B cell (primary cell): ENCODE measurements at regions of chr17 and their contacts with region 1.

Region 1: DNA sequence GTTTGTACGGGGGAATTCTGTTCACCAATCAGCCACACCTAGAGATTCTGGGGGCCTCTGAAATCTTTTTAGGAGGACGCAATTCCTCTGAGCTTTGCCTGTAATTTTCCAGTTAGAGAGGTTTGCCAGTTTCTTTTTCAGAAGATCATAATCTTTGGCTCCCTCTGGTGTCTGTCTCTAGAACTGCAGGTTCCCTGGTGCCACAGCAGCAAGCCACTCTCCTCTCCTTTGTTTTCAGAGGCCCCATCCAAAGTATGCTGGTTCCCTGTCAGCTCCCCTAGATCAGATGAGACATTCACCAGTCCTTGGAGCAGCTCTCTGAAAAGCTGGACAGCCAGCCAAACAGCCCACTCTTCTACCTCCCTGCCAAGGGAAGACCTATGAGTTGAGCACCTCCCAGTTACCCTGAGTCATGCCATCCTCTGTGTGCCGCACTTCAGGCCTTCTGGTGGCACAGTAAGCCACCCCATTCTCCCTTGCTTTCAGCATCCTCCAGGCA is 36.1 kb downstream of the RNF112 start:
- DNase-seq: peak; percentile 80
- ATAC-seq: peak; percentile 71
- H3K4me3 ChIP-seq: no peak overlapping the region
- H3K4me3 Mint-ChIP-seq: no peak overlapping the region
- H3K27ac ChIP-seq: no peak overlapping the region
- H3K27ac Mint-ChIP-seq: no peak overlapping the region
- H3K4me1 ChIP-seq: no peaks in the 10 kb centered on the region
- H3K4me1 Mint-ChIP-seq: no peaks in the 10 kb centered on the region
- H3K27me3 ChIP-seq: peaks cover 0 to 15% (median 5%) of the 10 kb centered on the region in 4 experiments
- H3K27me3 Mint-ChIP-seq: peaks cover 22% of the 10 kb centered on the region
- CTCF ChIP-seq: peak; percentile 92

Region 2: DNA sequence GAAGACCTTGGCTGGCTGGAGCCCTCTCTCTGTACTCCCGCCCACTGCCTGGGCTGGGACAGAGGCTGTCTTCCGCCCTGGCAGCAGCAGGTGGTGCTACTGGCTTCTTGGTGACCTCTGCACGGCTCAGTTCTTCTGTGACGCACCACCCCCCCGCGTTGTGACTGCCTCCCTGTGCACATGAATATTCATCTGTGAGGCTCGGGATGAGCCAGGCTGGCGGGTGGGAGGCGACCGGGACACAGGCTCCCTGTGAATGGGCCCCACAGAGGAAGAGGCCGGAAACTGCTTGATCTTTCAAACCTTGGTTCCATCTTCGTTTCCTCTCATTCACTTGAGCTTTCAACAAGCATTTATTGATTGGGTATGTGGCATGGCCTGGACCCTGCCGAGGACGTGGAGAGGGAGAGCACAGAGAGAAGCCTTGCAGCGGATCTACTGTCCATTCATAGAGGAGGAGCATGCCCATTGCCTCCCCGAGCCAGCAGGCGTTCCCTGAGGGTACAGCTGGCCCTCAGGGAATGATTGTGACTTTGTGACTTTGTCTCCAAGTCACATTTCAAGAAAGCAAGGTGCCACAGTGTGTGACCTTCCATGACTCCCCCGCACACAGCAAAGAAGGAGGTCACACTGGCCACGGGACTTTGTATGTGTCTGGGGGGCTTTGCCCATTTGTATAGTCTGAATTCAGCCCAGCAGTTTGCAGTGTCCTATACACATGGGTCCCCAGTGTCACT is 129.6 kb before region 1 on chr17:
- CTCF ChIA-PET with region 1: interaction called, 3 read pairs
- POLR2A ChIA-PET with region 1: no interaction called
- intact Hi-C with region 1: loop called (anchors 1 kb)
- DNase-seq: peak; percentile 54
- ATAC-seq: peak; percentile 96
- H3K4me3 ChIP-seq: no peak overlapping the region
- H3K4me3 Mint-ChIP-seq: no peak overlapping the region
- H3K27ac ChIP-seq: no peak overlapping the region
- H3K27ac Mint-ChIP-seq: no peak overlapping the region
- H3K4me1 ChIP-seq: peaks cover 0 to 4% of the 10 kb centered on the region in 2 donors
- H3K4me1 Mint-ChIP-seq: peaks cover 7% of the 10 kb centered on the region
- H3K27me3 ChIP-seq: peaks cover 0 to 20% (median 0%) of the 10 kb centered on the region in 4 experiments
- H3K27me3 Mint-ChIP-seq: peaks cover 6% of the 10 kb centered on the region
- CTCF ChIP-seq: peak; percentile 17

Region 3: DNA sequence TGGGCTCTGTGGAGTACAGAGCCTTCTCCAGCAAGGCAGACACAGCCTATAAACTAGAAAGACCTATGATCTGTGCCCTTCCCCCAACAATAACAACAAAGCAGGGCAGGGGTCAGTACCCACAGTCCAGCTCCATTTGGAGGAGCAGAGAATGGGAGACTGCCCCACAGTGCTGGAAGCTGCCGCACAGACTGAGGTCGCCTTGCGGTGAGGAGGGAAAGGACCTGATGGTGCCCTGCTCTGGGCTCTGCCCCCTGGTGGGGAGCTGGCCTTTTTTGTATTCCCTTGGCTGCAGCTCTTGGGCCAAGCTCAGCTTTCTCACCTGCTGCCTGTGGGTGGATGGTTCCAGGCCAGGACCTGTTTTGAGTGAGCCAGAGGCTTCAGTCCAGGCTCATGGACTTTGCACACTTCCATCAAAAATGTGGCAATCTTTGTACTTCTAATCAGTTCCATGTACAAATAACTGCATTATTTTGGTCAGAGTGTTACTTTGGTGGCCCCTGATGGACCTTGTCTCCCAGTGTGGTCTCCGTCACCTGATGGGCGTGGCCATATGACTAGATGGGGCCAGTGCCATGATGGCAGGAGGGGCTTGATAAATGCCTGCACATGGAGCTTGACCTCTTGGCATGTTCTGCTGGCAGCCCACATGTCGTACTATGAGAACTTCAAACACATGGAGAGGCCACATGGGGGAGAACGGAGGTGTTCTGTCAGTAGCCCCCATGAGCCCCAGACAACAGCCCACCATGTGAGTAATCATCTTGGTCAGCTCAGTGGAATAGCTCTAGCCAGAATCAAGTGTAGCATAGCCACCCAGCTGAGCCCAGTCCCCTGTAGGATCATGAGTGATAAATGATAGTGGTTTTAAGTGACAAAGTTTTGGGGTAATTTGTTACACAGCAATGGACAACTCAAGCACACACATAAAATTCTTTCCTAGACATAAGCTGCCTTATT is 108.8 kb before region 1 on chr17:
- CTCF ChIA-PET with region 1: interaction called, 23 read pairs
- POLR2A ChIA-PET with region 1: no interaction called
- intact Hi-C with region 1: no loop called
- DNase-seq: peak; percentile 86
- ATAC-seq: peak; percentile 98
- H3K4me3 ChIP-seq: no peak overlapping the region
- H3K4me3 Mint-ChIP-seq: no peak overlapping the region
- H3K27ac ChIP-seq: no peak overlapping the region
- H3K27ac Mint-ChIP-seq: no peak overlapping the region
- H3K4me1 ChIP-seq: peaks cover 0 to 3% of the 10 kb centered on the region in 2 donors
- H3K4me1 Mint-ChIP-seq: no peaks in the 10 kb centered on the region
- H3K27me3 ChIP-seq: peaks cover 0 to 3% (median 0%) of the 10 kb centered on the region in 4 experiments
- H3K27me3 Mint-ChIP-seq: peaks cover 15% of the 10 kb centered on the region
- CTCF ChIP-seq: peak; percentile 88

Region 4: DNA sequence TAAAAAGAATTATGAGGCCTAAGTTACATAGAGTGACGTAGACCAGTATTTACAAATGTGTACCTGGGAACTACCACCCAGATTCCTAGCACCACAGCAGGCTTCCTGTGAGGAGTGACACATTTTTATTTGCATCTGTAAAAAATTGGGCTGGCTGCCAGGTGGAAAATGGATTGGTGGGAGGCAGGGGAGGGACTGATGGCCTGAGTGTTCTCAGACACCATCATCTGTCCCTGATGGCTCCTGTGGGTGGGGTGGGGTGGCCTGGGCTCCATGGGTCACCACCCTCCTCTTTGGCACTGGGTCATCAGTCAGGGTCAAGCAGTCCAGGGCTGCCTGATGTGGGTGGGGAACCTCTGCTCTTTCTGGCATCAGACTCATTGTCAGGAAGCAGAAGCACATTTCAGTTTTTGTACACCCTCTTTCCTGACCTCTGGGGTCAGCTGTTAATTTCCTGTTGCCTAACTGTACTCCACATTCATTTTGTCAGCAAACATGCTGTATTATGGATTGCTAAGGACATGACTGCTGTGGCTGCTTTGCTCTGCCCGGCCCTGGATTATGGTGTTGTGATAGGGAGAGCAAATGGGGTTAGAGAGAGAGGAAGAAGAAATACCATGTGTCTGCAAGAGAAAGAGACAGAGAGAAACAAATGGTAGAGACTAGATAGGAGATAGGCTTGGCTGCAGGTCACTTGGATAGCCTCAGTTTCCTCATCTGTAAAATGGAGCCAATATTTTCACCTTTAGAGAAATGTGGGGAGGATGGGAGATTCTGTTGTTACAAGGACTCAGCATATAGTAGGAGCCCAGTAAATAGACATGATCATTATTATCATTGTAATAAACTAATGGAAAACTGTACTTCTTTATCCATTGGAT is 48.6 kb before region 1 on chr17:
- CTCF ChIA-PET with region 1: no interaction called
- POLR2A ChIA-PET with region 1: no interaction called
- intact Hi-C with region 1: no loop called
- DNase-seq: no peak
- ATAC-seq: no peak
- H3K4me3 ChIP-seq: no peak overlapping the region
- H3K4me3 Mint-ChIP-seq: no peak overlapping the region
- H3K27ac ChIP-seq: no peak overlapping the region
- H3K27ac Mint-ChIP-seq: no peak overlapping the region
- H3K4me1 ChIP-seq: no peaks in the 10 kb centered on the region
- H3K4me1 Mint-ChIP-seq: no peaks in the 10 kb centered on the region
- H3K27me3 ChIP-seq: peaks cover 0 to 14% (median 1%) of the 10 kb centered on the region in 4 experiments
- H3K27me3 Mint-ChIP-seq: peaks cover 25% of the 10 kb centered on the region
- CTCF ChIP-seq: no peak

Region 5: GRCh38 chr17:19457830-19458271 is 10.7 kb after region 1 on chr17:
- CTCF ChIA-PET with region 1: interaction called, 20 read pairs
- POLR2A ChIA-PET with region 1: no interaction called
- intact Hi-C with region 1: loop called (anchors 2 kb)
- DNase-seq: no peak
- ATAC-seq: no peak
- H3K4me3 ChIP-seq: no peak overlapping the region
- H3K4me3 Mint-ChIP-seq: no peak overlapping the region
- H3K27ac ChIP-seq: no peak overlapping the region
- H3K27ac Mint-ChIP-seq: no peak overlapping the region
- H3K4me1 ChIP-seq: peaks cover 20 to 24% of the 10 kb centered on the region in 2 donors
- H3K4me1 Mint-ChIP-seq: peaks cover 28% of the 10 kb centered on the region
- H3K27me3 ChIP-seq: peaks cover 0 to 7% (median 2%) of the 10 kb centered on the region in 4 experiments
- H3K27me3 Mint-ChIP-seq: peaks cover 9% of the 10 kb centered on the region
- CTCF ChIP-seq: no peak

Region 6: DNA sequence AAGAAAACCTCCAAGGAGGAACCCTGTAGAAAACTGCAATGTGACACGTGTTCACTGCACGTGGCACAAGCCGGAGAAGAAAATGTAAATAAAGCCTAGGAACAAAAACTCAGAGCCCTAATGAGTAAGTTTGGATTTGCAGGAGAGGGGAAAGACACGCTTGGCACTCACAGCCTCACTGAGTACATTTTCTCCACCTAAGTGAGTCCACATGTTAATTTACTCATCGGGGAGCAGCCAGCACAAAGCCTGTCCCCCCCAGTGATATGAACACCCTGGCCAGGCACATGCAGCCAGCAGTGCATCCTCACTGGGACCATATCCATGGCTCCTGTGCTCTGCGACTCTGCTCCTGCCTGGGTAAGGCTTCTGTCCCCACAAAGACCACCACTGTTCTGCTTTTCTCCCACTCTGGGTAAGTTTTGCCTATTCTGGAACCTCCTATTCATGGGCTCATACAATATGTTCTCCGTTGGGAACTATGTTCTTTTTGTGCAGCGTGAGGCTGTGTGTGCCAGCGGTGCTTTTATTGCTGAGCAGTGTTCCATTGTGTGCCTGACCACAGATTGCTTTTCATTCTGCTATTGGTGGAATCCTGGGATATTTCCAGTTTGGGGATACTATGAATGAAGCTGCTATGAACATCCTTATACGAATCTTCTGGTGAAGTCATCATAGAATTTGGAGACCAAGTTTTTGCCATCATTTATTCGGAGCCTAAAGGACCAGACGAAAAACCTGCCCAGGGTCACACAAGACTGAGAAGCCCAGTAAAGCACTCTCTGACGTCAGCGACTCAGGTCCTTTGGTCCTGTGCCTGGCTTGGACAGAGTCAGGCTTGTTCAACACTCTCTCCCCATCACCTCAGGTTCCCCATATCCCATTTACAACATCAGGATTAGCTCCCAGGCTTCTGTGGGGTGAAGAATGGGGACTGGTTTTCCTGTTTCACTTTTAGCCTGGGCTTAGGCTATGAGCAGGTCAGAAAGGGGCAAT is 17.2 kb after region 1 on chr17:
- CTCF ChIA-PET with region 1: interaction called, 6 read pairs
- POLR2A ChIA-PET with region 1: interaction called, 3 read pairs
- intact Hi-C with region 1: loop called (anchors 2 kb)
- DNase-seq: no peak
- ATAC-seq: no peak
- H3K4me3 ChIP-seq: peak overlapping the region in 1 of 5 experiments; percentile 25
- H3K4me3 Mint-ChIP-seq: peak overlapping the region; percentile 74
- H3K27ac ChIP-seq: peak overlapping the region; percentile 78 to 86
- H3K27ac Mint-ChIP-seq: peak overlapping the region; percentile 91
- H3K4me1 ChIP-seq: peaks cover 47 to 54% of the 10 kb centered on the region in 2 donors
- H3K4me1 Mint-ChIP-seq: peaks cover 48% of the 10 kb centered on the region
- H3K27me3 ChIP-seq: no peaks in the 10 kb centered on the region
- H3K27me3 Mint-ChIP-seq: no peaks in the 10 kb centered on the region
- CTCF ChIP-seq: no peak

Region 7: GRCh38 chr17:19482576-19482975 is 35.4 kb after region 1 on chr17:
- CTCF ChIA-PET with region 1: no interaction called
- POLR2A ChIA-PET with region 1: no interaction called
- intact Hi-C with region 1: no loop called
- DNase-seq: no peak
- ATAC-seq: no peak
- H3K4me3 ChIP-seq: no peak overlapping the region
- H3K4me3 Mint-ChIP-seq: no peak overlapping the region
- H3K27ac ChIP-seq: no peak overlapping the region
- H3K27ac Mint-ChIP-seq: no peak overlapping the region
- H3K4me1 ChIP-seq: no peaks in the 10 kb centered on the region
- H3K4me1 Mint-ChIP-seq: no peaks in the 10 kb centered on the region
- H3K27me3 ChIP-seq: peaks cover 0 to 3% (median 0%) of the 10 kb centered on the region in 4 experiments
- H3K27me3 Mint-ChIP-seq: peaks cover 5% of the 10 kb centered on the region
- CTCF ChIP-seq: no peak

Region 8: GRCh38 chr17:19590912-19591551 is 143.9 kb after region 1 on chr17:
- CTCF ChIA-PET with region 1: no interaction called
- POLR2A ChIA-PET with region 1: no interaction called
- intact Hi-C with region 1: no loop called
- DNase-seq: no peak
- ATAC-seq: no peak
- H3K4me3 ChIP-seq: no peak overlapping the region
- H3K4me3 Mint-ChIP-seq: no peak overlapping the region
- H3K27ac ChIP-seq: no peak overlapping the region
- H3K27ac Mint-ChIP-seq: no peak overlapping the region
- H3K4me1 ChIP-seq: no peaks in the 10 kb centered on the region
- H3K4me1 Mint-ChIP-seq: no peaks in the 10 kb centered on the region
- H3K27me3 ChIP-seq: peaks cover 0 to 2% (median 1%) of the 10 kb centered on the region in 4 experiments
- H3K27me3 Mint-ChIP-seq: peaks cover 14% of the 10 kb centered on the region
- CTCF ChIP-seq: no peak

Region 9: DNA sequence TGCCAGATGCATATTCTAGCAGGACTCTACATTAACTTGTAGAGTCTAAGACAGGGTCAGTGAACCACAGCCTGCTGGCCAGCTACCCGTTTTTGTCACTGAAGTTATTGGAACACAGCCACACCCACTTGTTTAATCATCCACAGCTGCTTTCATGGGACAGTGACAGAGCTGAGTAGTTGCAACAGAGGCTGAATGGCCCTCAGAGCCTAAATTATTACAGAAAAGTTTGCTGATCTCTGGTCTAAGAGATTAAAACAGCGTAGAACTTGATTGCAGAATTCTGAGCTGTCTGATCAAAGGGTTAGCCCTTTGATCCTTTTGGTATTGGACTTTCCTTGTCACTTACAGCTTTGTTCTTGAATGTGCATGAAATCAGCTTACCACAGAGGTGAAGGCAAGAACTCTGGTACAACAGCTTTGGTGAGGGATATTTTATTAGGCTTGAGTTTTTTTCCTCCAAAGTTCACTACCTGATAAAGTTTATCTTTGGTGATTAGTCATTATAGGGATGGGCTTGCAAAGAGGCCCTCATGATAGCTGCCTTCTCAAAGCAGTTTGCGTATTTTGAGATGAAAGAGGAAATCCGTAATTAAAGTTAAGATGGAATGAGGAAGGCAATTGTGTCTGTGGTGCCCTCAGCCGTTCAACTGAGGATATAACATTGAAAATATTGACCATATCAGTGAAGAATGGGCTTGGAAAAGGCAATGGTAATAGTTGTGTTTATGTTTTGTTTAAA is 225.0 kb after region 1 on chr17:
- CTCF ChIA-PET with region 1: no interaction called
- POLR2A ChIA-PET with region 1: no interaction called
- intact Hi-C with region 1: no loop called
- DNase-seq: no peak
- ATAC-seq: no peak
- H3K4me3 ChIP-seq: no peak overlapping the region
- H3K4me3 Mint-ChIP-seq: no peak overlapping the region
- H3K27ac ChIP-seq: no peak overlapping the region
- H3K27ac Mint-ChIP-seq: no peak overlapping the region
- H3K4me1 ChIP-seq: peaks cover 9 to 15% of the 10 kb centered on the region in 2 donors
- H3K4me1 Mint-ChIP-seq: peaks cover 18% of the 10 kb centered on the region
- H3K27me3 ChIP-seq: no peaks in the 10 kb centered on the region
- H3K27me3 Mint-ChIP-seq: no peaks in the 10 kb centered on the region
- CTCF ChIP-seq: no peak